ENCODE measurements at regions of chr11 and their contacts with region 1.

Region 1: GRCh38 chr11:117259417-117259816 is 26.9 kb downstream of the RNF214 start:
- DNase-seq: no peak
- H3K4me3 ChIP-seq: no peak overlapping the region
- H3K27ac ChIP-seq: no peak overlapping the region
- H3K4me1 ChIP-seq: no peaks in the 10 kb centered on the region
- H3K27me3 ChIP-seq: no peaks in the 10 kb centered on the region
- CTCF ChIP-seq: no peak
- EP300 ChIP-seq: no peak
- POLR2A ChIP-seq: no peak

Region 2: GRCh38 chr11:117851106-117851505 is 591.7 kb after region 1 on chr11:
- in situ Hi-C with region 1: no loop called
- intact Hi-C with region 1: loop called (anchors 5 kb)
- DNase-seq: no peak
- H3K4me3 ChIP-seq: no peak overlapping the region
- H3K27ac ChIP-seq: peak overlapping the region; percentile 35 to 59 (median 39)
- H3K4me1 ChIP-seq: peaks cover 0 to 13% (median 2%) of the 10 kb centered on the region in 4 donors
- H3K27me3 ChIP-seq: no peaks in the 10 kb centered on the region
- CTCF ChIP-seq: no peak
- EP300 ChIP-seq: no peak
- POLR2A ChIP-seq: no peak